Calu3 (cell line): ENCODE measurements at regions of chr10 and their contacts with region 1.

Region 1: GRCh38 chr10:16777473-16778370 is 39.5 kb downstream of the RSU1 start:
- DNase-seq: peak; percentile 8
- H3K4me3 Mint-ChIP-seq: no peak overlapping the region
- H3K27ac Mint-ChIP-seq: no peak overlapping the region
- H3K4me1 Mint-ChIP-seq: peaks cover 8% of the 10 kb centered on the region
- H3K27me3 Mint-ChIP-seq: no peaks in the 10 kb centered on the region
- CTCF ChIP-seq: peak; percentile 64

Region 2: DNA sequence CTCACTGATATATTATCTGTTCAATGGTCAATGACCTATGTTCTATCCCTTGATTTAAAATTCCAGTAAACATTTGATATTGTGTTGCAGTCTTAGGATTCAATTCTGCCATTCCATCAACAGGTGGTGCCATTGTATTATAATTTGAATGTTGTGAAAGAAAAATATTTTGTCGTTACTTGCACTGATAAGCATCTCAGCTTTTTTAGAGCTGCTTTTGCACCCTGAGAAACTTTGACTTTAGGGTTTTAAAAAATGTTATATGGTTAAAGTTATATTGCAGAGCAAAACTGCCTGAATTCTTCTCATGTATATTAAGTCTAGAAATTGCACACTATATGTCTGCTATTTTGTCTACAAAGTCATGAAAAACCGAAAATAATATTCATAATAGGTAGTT is 898.7 kb before region 1 on chr10:
- CTCF ChIA-PET with region 1: interaction called, 3 read pairs
- intact Hi-C with region 1: loop called (anchors 1 kb)
- DNase-seq: no peak
- H3K4me3 Mint-ChIP-seq: no peak overlapping the region
- H3K27ac Mint-ChIP-seq: no peak overlapping the region
- H3K4me1 Mint-ChIP-seq: no peaks in the 10 kb centered on the region
- H3K27me3 Mint-ChIP-seq: peaks cover 61% of the 10 kb centered on the region
- CTCF ChIP-seq: peak; percentile 35

Region 3: DNA sequence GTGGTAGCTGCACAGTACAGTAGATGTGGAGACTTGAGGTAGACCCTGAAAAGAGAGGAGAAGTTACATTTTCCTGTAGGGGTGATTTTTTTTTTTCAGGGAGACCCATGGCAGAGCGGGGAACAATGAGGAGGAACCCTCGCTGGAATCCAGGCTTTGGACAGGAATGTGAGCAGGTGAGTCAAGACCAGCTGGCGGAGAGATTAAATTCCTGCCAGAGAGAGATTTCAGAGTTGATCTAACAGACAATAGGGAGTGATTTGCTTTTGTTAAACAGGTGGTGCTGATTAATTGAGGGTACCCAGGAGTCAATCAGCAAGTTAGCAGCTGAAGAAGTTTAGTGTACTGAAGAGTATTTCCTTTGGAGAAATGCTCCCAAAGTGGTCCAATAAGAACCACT is 875.8 kb before region 1 on chr10:
- CTCF ChIA-PET with region 1: interaction called, 3 read pairs
- intact Hi-C with region 1: loop called (anchors 2 kb)
- DNase-seq: no peak
- H3K4me3 Mint-ChIP-seq: no peak overlapping the region
- H3K27ac Mint-ChIP-seq: no peak overlapping the region
- H3K4me1 Mint-ChIP-seq: no peaks in the 10 kb centered on the region
- H3K27me3 Mint-ChIP-seq: peaks cover 23% of the 10 kb centered on the region
- CTCF ChIP-seq: no peak

Region 4: GRCh38 chr10:16116404-16117304 is 661.1 kb before region 1 on chr10:
- CTCF ChIA-PET with region 1: no interaction called
- intact Hi-C with region 1: loop called (anchors 2 kb)
- DNase-seq: peak; percentile 6
- H3K4me3 Mint-ChIP-seq: no peak overlapping the region
- H3K27ac Mint-ChIP-seq: no peak overlapping the region
- H3K4me1 Mint-ChIP-seq: no peaks in the 10 kb centered on the region
- H3K27me3 Mint-ChIP-seq: no peaks in the 10 kb centered on the region
- CTCF ChIP-seq: peak; percentile 41

Region 5: DNA sequence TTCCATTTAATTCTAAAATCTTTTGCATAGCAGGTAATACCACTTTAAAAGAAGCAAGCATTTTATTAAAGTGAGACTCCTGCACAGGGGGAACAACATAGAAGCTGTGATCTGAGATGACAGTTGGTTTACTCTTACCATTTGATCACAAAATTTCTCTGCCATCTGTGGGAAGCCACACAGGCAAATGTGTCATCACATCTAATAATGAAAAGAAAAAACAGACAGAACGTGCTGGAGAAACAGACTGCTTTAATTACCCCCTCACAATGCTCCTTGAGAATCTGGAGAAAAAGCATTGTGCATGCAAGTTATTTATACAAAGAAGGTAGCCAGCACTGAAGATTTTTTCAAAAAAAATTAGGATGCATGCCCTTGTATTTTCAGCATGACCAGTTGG is 506.2 kb before region 1 on chr10:
- CTCF ChIA-PET with region 1: no interaction called
- intact Hi-C with region 1: no loop called
- DNase-seq: no peak
- H3K4me3 Mint-ChIP-seq: no peak overlapping the region
- H3K27ac Mint-ChIP-seq: no peak overlapping the region
- H3K4me1 Mint-ChIP-seq: no peaks in the 10 kb centered on the region
- H3K27me3 Mint-ChIP-seq: no peaks in the 10 kb centered on the region
- CTCF ChIP-seq: no peak

Region 6: GRCh38 chr10:16606421-16606820 is 171.3 kb before region 1 on chr10:
- CTCF ChIA-PET with region 1: no interaction called
- intact Hi-C with region 1: no loop called
- DNase-seq: no peak
- H3K4me3 Mint-ChIP-seq: no peak overlapping the region
- H3K27ac Mint-ChIP-seq: no peak overlapping the region
- H3K4me1 Mint-ChIP-seq: no peaks in the 10 kb centered on the region
- H3K27me3 Mint-ChIP-seq: no peaks in the 10 kb centered on the region
- CTCF ChIP-seq: no peak